ENCODE measurements at regions of chr17 and their contacts with region 1.

Region 1: DNA sequence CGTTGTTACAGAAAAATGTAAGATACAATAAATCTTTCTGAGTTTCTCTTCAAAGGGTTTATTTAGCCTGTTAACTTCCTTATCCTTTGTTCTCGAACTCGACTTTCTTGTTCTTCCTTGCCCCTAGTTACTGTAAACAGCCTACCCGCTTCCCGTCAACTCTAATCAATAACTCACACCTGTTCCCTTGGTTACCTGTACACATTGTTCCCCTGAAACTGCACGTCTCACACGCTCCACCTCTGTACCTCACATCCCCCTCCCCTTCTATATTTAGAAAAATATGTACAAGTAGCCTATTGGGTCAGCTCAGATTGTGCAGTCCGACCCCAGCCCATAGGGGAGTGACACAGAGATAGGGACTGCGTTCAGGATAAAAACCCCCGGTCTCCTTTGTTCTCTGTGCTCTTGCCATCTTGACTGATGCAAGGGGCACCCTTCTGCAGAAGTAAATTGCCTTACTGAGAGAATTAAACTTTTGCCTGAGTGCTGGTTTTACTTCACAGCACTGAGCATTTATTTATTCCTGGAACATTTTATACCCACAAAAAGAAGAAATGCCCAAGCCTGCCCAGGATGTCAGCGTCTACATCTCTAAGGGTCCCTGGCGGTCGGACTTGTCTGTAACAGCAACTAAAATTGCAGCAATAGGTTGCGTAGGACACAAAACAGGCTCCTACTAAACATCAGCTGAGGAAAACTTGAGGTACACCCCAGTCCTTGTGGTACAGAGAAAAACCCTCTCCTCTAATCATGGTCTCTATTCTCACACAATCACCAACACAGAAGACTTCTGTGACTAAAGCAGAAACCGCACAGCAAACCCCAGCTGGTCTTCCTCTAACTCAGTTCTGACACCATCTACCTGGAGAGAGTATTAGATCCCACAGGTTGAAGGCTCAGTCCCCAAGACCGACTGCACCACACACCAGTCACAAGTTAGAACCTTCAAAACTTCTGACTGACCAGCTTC is 11.3 kb downstream of the WDR45B start:
- DNase-seq: peak; percentile 47 to 81
- H3K4me3 ChIP-seq: no peak overlapping the region
- H3K27ac ChIP-seq: peak overlapping the region; percentile 75
- H3K4me1 ChIP-seq: no peaks in the 10 kb centered on the region
- H3K27me3 ChIP-seq: no peaks in the 10 kb centered on the region
- CTCF ChIP-seq: no peak

Region 2: DNA sequence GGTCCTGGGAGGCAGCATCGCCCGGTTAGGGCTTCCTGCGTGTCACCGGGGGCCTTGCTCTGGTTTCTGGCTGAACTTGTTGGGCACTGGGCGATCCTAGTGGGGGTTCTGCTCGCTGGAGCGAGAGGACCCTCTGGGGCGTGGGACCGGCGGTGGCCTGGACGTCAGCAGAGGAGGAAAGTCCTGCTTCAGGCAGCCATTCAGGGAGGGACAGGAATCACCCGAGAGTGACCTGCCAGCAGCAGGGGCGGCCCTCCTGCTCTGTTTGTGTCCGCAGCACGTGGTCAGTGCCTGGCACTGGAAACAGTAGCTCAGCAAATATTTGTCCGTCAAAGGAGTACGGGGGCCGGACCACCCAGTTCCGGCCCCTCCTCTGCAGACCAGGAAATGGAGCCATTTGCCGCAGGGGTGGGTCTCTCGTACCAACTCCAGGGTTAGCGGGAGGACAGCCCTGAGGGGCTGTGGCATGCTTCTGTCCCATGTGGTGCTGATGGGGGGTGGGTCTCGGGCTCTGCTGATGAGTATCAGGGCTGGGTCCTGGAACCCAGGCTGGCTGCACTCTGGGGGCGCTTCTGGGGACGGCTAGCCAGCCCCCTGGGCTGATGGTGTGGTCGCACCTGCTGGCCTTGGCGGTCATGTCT is 1553.7 kb before region 1 on chr17:
- CTCF ChIA-PET with region 1: no interaction called
- POLR2A ChIA-PET with region 1: interaction called, 32 read pairs
- intact Hi-C with region 1: no loop called
- DNase-seq: no peak
- H3K4me3 ChIP-seq: no peak overlapping the region
- H3K27ac ChIP-seq: no peak overlapping the region
- H3K4me1 ChIP-seq: no peaks in the 10 kb centered on the region
- H3K27me3 ChIP-seq: no peaks in the 10 kb centered on the region
- CTCF ChIP-seq: no peak

Region 3: GRCh38 chr17:82615084-82616020 is 21.6 kb before region 1 on chr17:
- CTCF ChIA-PET with region 1: no interaction called
- POLR2A ChIA-PET with region 1: interaction called, 26 read pairs
- intact Hi-C with region 1: no loop called
- DNase-seq: no peak
- H3K4me3 ChIP-seq: no peak overlapping the region
- H3K27ac ChIP-seq: no peak overlapping the region
- H3K4me1 ChIP-seq: no peaks in the 10 kb centered on the region
- H3K27me3 ChIP-seq: no peaks in the 10 kb centered on the region
- CTCF ChIP-seq: no peak

Region 4: DNA sequence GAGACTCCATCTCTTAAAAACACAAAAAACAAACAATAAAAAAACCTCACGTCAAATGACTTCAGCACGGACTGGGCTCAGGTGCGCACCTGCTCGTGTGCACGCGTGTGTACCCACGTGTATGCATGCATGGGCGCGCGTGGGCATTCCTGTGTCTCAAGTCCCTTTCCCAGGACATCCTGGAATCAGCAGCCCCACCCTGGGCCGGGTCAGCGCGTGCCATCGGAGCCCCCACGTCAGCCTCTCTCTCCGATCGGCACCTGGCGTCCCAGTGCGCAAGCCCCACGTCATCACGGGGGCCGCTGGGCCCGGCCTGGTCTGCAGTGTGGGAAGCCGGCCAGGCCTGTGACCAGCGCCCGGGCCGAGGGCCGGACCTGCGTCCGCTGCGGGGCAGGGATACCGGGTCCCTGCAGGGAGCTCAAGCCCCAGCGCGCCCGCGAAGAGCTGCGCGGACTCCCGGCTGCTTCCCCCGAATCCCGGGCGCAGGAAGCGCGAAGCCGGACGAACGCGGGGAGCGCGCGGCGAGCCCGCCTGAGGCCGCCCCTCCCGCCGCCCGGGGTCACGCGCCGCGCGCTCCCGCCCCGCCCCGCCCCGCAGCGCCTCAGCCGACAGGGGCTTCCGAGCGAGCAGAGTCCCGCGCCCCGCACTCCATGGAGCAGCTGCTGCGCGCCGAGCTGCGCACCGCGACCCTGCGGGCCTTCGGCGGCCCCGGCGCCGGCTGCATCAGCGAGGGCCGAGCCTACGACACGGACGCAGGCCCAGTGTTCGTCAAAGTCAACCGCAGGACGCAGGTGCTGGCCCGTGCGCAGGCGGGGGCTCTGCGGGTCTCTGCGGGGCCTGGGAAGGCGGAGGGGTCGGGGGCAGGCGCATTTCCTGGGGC is 98.3 kb after region 1 on chr17 and contains the start of gene FN3K:
- CTCF ChIA-PET with region 1: no interaction called
- POLR2A ChIA-PET with region 1: no interaction called
- intact Hi-C with region 1: no loop called
- DNase-seq: peak in 1 of 2 experiments; percentile 52
- H3K4me3 ChIP-seq: peak within 1 kb of the TSS; percentile 56; the same call in 1 of the 2 replicates
- H3K27ac ChIP-seq: no peak within 1 kb of the TSS
- H3K4me1 ChIP-seq: no peaks in the 10 kb centered on the region
- H3K27me3 ChIP-seq: no peaks in the 10 kb centered on the region
- CTCF ChIP-seq: no peak
- total RNA-seq, gene FN3K: 14.0 and 22.5 TPM in 2 replicates